ENCODE measurements at regions of chr4 and their contacts with region 1.

Region 1: DNA sequence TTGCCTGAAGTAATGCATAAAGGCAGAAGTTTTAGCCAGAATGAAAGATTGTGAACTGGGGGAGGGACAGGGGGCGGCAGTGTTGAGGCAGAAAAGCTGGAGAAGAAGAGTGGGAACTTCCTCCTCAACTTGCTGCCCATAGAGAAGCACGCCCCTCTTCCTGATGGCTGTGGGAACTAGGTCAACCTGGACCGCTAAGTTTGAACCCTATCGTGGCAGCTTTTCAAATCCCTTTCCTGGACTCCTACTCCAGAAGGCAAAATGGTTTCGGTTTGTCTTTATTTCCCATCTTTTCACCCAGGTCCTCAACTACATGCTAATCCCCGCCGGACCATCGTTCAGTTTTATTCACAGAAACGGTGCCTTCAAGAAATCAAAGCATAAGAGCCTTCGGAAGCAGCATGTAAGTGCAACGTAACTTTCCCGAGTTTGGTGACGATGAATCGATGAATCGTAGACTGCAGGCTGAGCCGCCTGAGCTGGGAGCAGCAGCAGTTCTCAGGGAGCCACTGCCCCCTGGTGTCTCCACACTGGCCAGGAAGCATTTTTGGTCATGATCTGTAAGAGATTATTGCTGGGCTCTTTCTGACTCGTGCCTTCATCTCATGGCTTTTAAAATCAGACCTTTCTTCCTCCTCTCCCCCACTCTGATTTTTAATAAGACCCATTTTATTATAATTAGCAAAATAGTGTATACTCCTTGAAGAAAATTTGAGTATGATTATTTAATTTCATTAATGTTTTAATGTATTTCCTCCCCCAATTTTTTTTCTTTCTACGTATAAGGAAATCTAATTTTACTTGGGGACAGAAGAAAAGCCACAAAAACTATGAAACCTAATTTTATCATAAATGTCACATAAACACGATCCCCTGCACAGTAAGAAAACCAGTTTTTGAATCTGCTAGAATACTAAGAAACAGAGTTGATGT is 21.4 kb downstream of the SPINK2 start:
- DNase-seq: peak; percentile 57 to 80
- H3K4me3 ChIP-seq: peak overlapping the region; percentile 30 to 62 (median 42); a peak in 7 of 8 replicates
- H3K27ac ChIP-seq: no peak overlapping the region
- H3K4me1 ChIP-seq: peaks cover 0 to 6% (median 0%) of the 10 kb centered on the region in 4 experiments; a peak in 2 of 7 replicates
- H3K27me3 ChIP-seq: peaks cover 0 to 8% (median 5%) of the 10 kb centered on the region in 4 experiments; a peak in 5 of 7 replicates
- CTCF ChIP-seq: peak; percentile 91 to 96 (median 91)
- EP300 ChIP-seq: no peak
- POLR2A ChIP-seq: no peak
- RAD21 ChIP-seq: peak; percentile 99

Region 2: GRCh38 chr4:56745042-56745441 is 55.0 kb before region 1 on chr4:
- CTCF ChIA-PET with region 1: no interaction called
- POLR2A ChIA-PET with region 1: no interaction called
- DNase-seq: no peak
- H3K4me3 ChIP-seq: no peak overlapping the region
- H3K27ac ChIP-seq: no peak overlapping the region
- H3K4me1 ChIP-seq: no peaks in the 10 kb centered on the region
- H3K27me3 ChIP-seq: no peaks in the 10 kb centered on the region
- CTCF ChIP-seq: no peak
- EP300 ChIP-seq: no peak
- POLR2A ChIP-seq: no peak
- RAD21 ChIP-seq: no peak

Region 3: DNA sequence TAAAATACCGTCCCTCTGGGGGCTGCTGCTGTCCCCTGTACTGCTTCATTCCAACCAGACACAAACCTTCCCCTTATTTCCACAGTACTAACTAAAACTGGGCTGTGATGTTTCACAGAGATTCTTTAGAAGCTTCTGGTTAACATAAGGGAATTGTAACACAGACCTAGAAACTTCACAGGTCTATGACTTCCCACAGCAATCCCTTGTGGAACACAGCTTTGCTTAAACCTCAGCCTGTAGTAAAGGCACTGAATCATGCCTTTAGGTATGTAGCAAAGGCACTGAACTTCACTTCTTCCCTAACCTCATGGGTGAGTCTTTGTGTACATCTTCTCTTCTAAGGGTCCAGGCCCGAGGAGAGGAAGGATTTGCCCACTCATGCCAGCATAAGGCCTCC is 28.0 kb before region 1 on chr4:
- CTCF ChIA-PET with region 1: interaction called, 11 read pairs
- POLR2A ChIA-PET with region 1: interaction called, 4 read pairs
- DNase-seq: no peak
- H3K4me3 ChIP-seq: no peak overlapping the region
- H3K27ac ChIP-seq: no peak overlapping the region
- H3K4me1 ChIP-seq: peaks cover 0 to 7% (median 3%) of the 10 kb centered on the region in 4 experiments; a peak in 2 of 7 replicates
- H3K27me3 ChIP-seq: no peaks in the 10 kb centered on the region
- CTCF ChIP-seq: no peak
- EP300 ChIP-seq: no peak
- POLR2A ChIP-seq: no peak
- RAD21 ChIP-seq: no peak

Region 4: DNA sequence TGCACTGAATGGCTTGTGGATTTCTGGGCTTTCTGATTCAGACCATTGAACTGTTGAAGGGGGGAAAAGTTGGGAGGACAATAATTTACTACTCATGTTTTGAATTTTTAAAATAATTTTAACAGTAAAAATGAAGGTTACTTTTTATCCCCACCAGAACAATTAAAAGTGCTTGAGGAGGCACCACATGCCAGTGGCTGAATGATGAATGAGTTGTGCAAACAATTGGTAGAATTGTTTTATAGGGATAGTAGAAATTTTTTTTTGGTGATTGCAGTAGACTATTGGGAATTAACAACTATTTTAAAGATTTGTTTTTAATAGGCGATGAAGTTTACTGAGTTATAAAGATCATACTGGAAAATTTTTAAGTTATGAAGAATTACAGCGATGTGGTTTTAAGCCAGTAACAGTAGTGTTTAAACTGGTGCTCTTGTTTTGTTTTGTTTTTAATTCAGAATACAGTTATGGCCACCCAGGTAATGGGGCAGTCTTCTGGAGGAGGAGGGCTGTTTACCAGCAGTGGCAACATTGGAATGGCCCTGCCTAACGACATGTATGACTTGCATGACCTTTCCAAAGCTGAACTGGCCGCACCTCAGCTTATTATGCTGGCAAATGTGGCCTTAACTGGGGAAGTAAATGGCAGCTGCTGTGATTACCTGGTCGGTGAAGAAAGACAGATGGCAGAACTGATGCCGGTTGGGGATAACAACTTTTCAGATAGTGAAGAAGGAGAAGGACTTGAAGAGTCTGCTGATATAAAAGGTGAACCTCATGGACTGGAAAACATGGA is 110.3 kb after region 1 on chr4:
- CTCF ChIA-PET with region 1: no interaction called
- POLR2A ChIA-PET with region 1: no interaction called
- DNase-seq: no peak
- H3K4me3 ChIP-seq: peak overlapping the region; percentile 68 to 86 (median 73); a peak in 7 of 8 replicates
- H3K27ac ChIP-seq: no peak overlapping the region
- H3K4me1 ChIP-seq: peaks cover 8 to 18% (median 14%) of the 10 kb centered on the region in 4 experiments; a peak in 5 of 7 replicates
- H3K27me3 ChIP-seq: peaks cover 0 to 6% (median 0%) of the 10 kb centered on the region in 4 experiments; a peak in 3 of 7 replicates
- CTCF ChIP-seq: no peak
- EP300 ChIP-seq: no peak
- POLR2A ChIP-seq: no peak
- RAD21 ChIP-seq: no peak

Region 5: GRCh38 chr4:56930638-56931037 is 130.5 kb after region 1 on chr4:
- CTCF ChIA-PET with region 1: no interaction called
- POLR2A ChIA-PET with region 1: no interaction called
- DNase-seq: no peak
- H3K4me3 ChIP-seq: no peak overlapping the region
- H3K27ac ChIP-seq: no peak overlapping the region
- H3K4me1 ChIP-seq: no peaks in the 10 kb centered on the region
- H3K27me3 ChIP-seq: no peaks in the 10 kb centered on the region
- CTCF ChIP-seq: no peak
- EP300 ChIP-seq: no peak
- POLR2A ChIP-seq: no peak
- RAD21 ChIP-seq: no peak